Panc1 (cell line): ENCODE measurements at regions of chr2 and their contacts with region 1.

Region 1: DNA sequence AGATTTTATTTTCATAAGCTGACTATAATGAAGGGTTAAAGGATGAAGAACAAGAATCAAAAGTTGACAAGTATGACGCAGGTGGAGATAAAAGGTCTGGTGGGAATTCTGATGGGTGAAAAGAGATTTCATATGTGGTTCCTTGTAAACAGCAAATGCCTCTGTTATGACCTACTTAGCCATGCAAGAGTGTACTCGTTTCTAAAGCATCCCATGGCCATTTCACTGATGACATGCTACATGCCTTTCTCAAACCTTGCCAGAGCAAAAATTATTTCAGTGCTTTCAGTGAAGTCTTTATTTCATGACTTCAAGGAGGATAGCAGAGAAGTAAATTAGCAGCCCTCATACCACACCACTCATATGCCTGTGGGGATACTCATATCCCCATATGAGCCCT is 71.7 kb downstream of the FEZ2 start:
- DNase-seq: no peak
- ATAC-seq: no peak
- H3K4me3 ChIP-seq: no peak overlapping the region
- H3K27ac ChIP-seq: no peak overlapping the region; the same call in 1 of the 2 replicates
- H3K4me1 ChIP-seq: no peaks in the 10 kb centered on the region
- H3K27me3 ChIP-seq: no peaks in the 10 kb centered on the region
- CTCF ChIP-seq: no peak

Region 2: DNA sequence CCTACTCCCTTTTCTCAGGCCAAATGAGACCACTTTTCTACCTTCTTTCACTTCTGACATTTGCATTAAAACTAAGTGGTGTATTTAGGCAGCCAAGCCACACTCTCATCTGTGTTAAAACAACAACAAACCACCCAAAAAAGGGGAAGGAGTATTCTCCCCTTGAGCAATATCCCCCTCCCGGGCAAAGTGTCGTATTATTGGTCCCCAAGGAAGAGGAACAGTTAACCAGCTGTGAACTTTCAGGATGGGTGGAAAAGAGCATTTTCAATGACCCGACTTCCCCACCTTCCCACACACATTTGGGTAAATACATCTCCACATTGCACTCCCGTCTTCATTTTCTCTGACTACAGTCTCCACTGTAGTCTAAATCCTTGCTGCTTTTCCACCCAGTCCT is 27.5 kb after region 1 on chr2:
- CTCF ChIA-PET with region 1: no interaction called
- POLR2A ChIA-PET with region 1: no interaction called
- in situ Hi-C with region 1: no loop called
- intact Hi-C with region 1: loop called (anchors 1 kb)
- DNase-seq: no peak
- ATAC-seq: no peak
- H3K4me3 ChIP-seq: no peak overlapping the region
- H3K27ac ChIP-seq: peak overlapping the region; percentile 99
- H3K4me1 ChIP-seq: peaks cover 96% of the 10 kb centered on the region
- H3K27me3 ChIP-seq: no peaks in the 10 kb centered on the region
- CTCF ChIP-seq: no peak

Region 3: DNA sequence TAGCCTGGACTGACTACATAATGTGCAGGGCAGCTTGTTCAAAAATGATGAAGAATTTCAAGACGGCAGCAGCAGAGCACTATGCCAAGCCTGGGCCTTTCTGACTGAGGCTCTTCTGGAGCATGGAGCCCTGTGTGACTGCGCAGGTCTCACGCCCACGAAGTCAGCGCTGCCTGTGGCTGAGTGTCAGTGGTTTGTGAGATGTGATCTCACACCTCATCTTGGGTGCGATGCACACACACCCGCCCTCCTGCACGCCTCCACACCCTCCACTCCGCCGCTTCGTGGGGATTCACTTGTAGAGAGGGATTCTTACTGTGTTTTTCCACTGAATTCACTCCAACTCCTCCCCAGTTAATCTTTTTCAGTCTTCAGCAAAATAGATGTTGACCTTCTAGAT is 274.2 kb after region 1 on chr2:
- CTCF ChIA-PET with region 1: no interaction called
- POLR2A ChIA-PET with region 1: interaction called, 22 read pairs
- in situ Hi-C with region 1: no loop called
- intact Hi-C with region 1: no loop called
- DNase-seq: no peak
- ATAC-seq: no peak
- H3K4me3 ChIP-seq: no peak overlapping the region
- H3K27ac ChIP-seq: no peak overlapping the region
- H3K4me1 ChIP-seq: no peaks in the 10 kb centered on the region
- H3K27me3 ChIP-seq: no peaks in the 10 kb centered on the region
- CTCF ChIP-seq: no peak